Upper lobe of right lung (tissue), 1 donor: ENCODE measurements at regions of chr2 and their contacts with region 1.

Region 1: GRCh38 chr2:168920504-168921157 is 19.5 kb downstream of the G6PC2 start:
- DNase-seq: no peak
- ATAC-seq: peak; percentile 62
- H3K4me3 ChIP-seq: no peak overlapping the region
- H3K27ac ChIP-seq: no peak overlapping the region
- H3K4me1 ChIP-seq: no peaks in the 10 kb centered on the region
- H3K27me3 ChIP-seq: no peaks in the 10 kb centered on the region
- CTCF ChIP-seq: peak; percentile 72

Region 2: DNA sequence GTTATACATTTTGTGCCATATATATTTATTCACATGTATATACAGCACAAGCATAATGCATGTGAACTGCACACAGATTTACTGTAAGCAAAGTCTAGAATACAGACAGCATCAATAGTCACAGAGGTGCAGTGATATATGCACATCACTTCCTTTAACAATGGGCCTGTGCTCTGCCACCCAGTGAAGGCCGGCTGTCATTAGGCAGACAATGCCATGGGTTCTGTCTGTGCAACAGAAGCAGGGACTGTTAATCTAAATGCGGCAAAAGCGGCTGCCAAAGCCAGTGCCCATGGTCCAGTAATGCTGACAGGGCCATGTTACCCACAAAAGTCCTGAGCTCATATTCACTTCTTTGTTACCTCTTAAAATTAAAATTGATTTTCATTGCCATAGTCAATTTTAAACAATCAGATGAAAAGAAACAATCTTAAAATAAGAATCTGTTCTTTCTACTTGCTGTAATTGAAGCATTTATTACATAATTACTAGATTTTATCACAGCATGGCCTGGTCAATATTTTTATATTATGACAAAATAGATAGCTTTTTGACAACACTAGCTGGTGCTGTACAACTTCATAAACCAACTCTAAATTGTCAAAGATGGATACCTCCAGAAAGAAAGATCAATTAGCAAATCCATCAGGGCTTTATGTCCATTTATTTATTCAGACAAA is 905.2 kb before region 1 on chr2:
- intact Hi-C with region 1: no loop called
- DNase-seq: no peak
- ATAC-seq: no peak
- H3K4me3 ChIP-seq: no peak overlapping the region
- H3K27ac ChIP-seq: no peak overlapping the region
- H3K4me1 ChIP-seq: no peaks in the 10 kb centered on the region
- H3K27me3 ChIP-seq: no peaks in the 10 kb centered on the region
- CTCF ChIP-seq: no peak

Region 3: GRCh38 chr2:168346725-168347477 is 573.7 kb before region 1 on chr2:
- intact Hi-C with region 1: loop called (anchors 5 kb)
- DNase-seq: no peak
- ATAC-seq: peak; percentile 93
- H3K4me3 ChIP-seq: peak overlapping the region; percentile 55
- H3K27ac ChIP-seq: no peak overlapping the region
- H3K4me1 ChIP-seq: no peaks in the 10 kb centered on the region
- H3K27me3 ChIP-seq: no peaks in the 10 kb centered on the region
- CTCF ChIP-seq: peak; percentile 81